Activated CD8-positive, alpha-beta T cell treated with anti-CD3 and anti-CD28 coated beads, Interleukin-2, amount 10 ng/mL, durations not matched to agents 7 days and 5 days (primary cell): ENCODE measurements at regions of chr5 and their contacts with region 1.

Region 1: GRCh38 chr5:80191991-80192398 is 63.9 kb downstream of the SERINC5 start:
- DNase-seq: peak; percentile 78
- ATAC-seq: peak; percentile 73
- H3K4me3 Mint-ChIP-seq: peak overlapping the region; percentile 64
- H3K27ac Mint-ChIP-seq: peak overlapping the region; percentile 94
- H3K4me1 Mint-ChIP-seq: peaks cover 81% of the 10 kb centered on the region
- H3K27me3 Mint-ChIP-seq: no peaks in the 10 kb centered on the region

Region 2: DNA sequence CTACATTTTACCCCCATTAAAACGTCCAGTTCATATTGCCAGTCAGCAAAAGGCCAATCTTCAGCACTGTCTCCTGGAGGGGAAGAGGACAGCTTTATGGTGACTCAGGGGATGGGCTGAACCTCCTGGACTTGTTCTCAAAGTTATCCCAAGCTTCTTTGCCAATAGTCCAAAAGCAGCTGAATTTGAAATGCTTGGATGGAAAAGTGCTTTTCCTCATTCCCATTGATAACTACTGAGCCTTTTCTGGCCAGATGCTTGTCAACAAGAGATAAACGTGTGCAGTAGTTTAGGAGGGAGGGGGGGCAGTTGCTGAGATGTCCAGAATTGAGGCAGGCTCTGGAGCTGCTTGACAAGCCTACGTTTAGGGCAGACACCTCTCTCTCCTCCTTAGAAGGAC is 244.4 kb before region 1 on chr5:
- CTCF ChIA-PET with region 1: no interaction called
- POLR2A ChIA-PET with region 1: no interaction called
- DNase-seq: no peak
- ATAC-seq: no peak
- H3K4me3 Mint-ChIP-seq: no peak overlapping the region
- H3K27ac Mint-ChIP-seq: no peak overlapping the region
- H3K4me1 Mint-ChIP-seq: peaks cover 3% of the 10 kb centered on the region
- H3K27me3 Mint-ChIP-seq: no peaks in the 10 kb centered on the region

Region 3: DNA sequence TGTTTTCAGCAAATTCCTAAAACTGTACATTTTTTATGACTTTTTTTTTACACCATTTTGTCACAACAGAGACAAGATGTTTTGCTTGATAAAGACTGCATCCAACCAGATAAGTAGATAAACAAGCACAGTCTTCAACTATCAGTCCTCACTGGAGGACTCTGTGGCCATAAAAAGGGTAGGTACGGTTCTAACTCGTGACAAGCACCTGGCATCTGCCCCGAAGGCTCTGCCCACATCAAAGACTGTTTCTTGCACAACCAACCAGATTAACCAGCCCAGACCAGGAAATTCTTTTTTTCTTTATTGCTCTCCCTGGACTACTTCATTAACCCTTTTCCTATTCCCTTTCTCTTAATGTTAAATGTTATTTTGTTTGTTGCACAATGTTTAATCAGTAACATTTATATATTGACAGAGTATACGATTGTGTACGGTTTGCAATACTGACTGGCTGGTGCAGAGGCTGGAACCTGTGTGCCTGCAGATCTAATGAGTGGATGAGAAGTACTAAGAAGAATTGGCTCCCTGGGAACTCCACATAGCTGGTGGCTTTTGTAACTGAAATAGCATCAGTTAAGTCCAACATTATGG is 10.3 kb before region 1 on chr5:
- CTCF ChIA-PET with region 1: interaction called, 11 read pairs
- POLR2A ChIA-PET with region 1: interaction called, 52 read pairs
- DNase-seq: peak; percentile 75
- ATAC-seq: peak; percentile 74
- H3K4me3 Mint-ChIP-seq: peak overlapping the region; percentile 50
- H3K27ac Mint-ChIP-seq: peak overlapping the region; percentile 92
- H3K4me1 Mint-ChIP-seq: peaks cover 82% of the 10 kb centered on the region
- H3K27me3 Mint-ChIP-seq: no peaks in the 10 kb centered on the region

Region 4: DNA sequence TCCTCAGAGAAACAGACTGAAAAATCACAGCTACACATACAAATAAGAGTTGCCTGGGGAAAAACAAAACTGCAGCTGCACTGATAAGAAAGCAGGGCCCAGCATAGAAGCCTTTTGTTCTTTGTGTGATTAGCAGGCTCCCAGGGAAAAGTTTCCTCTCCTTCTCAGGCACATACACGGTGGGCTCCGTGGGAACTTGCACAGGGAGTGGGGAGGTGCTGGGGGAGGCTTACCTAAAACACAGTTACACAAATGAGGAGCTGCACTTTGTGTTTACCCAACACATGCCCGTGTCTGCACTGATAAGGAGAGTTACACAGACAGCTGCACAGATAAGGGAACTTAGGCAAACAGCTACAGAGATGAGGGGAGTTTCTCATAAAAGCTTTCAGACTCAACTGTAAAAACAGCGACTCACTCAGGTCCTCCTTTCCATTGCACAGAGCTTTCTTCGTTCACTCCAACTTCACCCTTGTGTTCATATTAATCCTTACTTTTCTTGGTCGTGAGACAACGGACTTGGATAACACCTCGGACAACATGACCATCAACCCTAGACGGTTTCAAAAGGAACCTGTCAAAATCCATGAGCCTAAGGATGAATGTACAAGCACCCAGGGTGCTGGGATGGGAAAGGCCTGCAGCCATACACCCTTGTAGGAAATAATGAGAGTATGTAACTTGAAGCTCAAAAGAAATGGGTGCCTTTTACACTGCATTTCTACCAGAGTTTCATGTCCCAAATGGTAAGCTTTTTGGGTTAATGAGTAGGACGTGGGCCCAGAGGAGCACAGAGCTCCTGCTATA is 13.0 kb after region 1 on chr5:
- CTCF ChIA-PET with region 1: interaction called, 42 read pairs
- POLR2A ChIA-PET with region 1: interaction called, 10 read pairs
- DNase-seq: no peak
- ATAC-seq: peak; percentile 41
- H3K4me3 Mint-ChIP-seq: no peak overlapping the region
- H3K27ac Mint-ChIP-seq: peak overlapping the region; percentile 48
- H3K4me1 Mint-ChIP-seq: peaks cover 42% of the 10 kb centered on the region
- H3K27me3 Mint-ChIP-seq: no peaks in the 10 kb centered on the region

Region 5: DNA sequence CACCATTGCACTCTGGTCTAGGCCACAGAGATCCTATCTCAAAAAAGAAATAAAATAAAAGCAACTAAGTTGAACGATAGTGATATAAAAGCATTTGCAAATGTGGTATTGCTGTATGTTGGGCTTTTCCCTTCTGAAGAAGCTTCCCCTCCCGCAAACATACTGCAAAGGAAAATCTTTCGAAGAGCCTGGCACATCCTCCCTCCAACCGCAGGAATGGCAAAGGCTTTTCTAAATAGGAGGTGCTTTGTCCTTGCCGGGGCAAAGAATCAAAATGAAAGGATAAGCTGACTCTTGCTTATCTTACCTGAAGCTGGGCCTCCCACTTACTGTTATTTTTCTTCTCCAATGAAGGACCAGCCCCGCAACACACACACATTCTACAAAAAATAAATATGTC is 18.0 kb after region 1 on chr5:
- CTCF ChIA-PET with region 1: interaction called, 42 read pairs
- POLR2A ChIA-PET with region 1: interaction called, 13 read pairs
- DNase-seq: no peak
- ATAC-seq: peak; percentile 2
- H3K4me3 Mint-ChIP-seq: no peak overlapping the region
- H3K27ac Mint-ChIP-seq: peak overlapping the region; percentile 47
- H3K4me1 Mint-ChIP-seq: peaks cover 74% of the 10 kb centered on the region
- H3K27me3 Mint-ChIP-seq: no peaks in the 10 kb centered on the region

Region 6: GRCh38 chr5:80216753-80217596 is 25.0 kb after region 1 on chr5:
- CTCF ChIA-PET with region 1: interaction called, 27 read pairs
- POLR2A ChIA-PET with region 1: interaction called, 13 read pairs
- DNase-seq: peak; percentile 50
- ATAC-seq: peak; percentile 41
- H3K4me3 Mint-ChIP-seq: peak overlapping the region; percentile 54
- H3K27ac Mint-ChIP-seq: peak overlapping the region; percentile 76
- H3K4me1 Mint-ChIP-seq: peaks cover 80% of the 10 kb centered on the region
- H3K27me3 Mint-ChIP-seq: no peaks in the 10 kb centered on the region

Region 7: GRCh38 chr5:80711938-80712337 is 519.9 kb after region 1 on chr5:
- CTCF ChIA-PET with region 1: no interaction called
- POLR2A ChIA-PET with region 1: no interaction called
- DNase-seq: no peak
- ATAC-seq: no peak
- H3K4me3 Mint-ChIP-seq: no peak overlapping the region
- H3K27ac Mint-ChIP-seq: no peak overlapping the region
- H3K4me1 Mint-ChIP-seq: peaks cover 41% of the 10 kb centered on the region
- H3K27me3 Mint-ChIP-seq: no peaks in the 10 kb centered on the region